BJ (cell line): ENCODE measurements at regions of chr9 and their contacts with region 1.

Region 1: DNA sequence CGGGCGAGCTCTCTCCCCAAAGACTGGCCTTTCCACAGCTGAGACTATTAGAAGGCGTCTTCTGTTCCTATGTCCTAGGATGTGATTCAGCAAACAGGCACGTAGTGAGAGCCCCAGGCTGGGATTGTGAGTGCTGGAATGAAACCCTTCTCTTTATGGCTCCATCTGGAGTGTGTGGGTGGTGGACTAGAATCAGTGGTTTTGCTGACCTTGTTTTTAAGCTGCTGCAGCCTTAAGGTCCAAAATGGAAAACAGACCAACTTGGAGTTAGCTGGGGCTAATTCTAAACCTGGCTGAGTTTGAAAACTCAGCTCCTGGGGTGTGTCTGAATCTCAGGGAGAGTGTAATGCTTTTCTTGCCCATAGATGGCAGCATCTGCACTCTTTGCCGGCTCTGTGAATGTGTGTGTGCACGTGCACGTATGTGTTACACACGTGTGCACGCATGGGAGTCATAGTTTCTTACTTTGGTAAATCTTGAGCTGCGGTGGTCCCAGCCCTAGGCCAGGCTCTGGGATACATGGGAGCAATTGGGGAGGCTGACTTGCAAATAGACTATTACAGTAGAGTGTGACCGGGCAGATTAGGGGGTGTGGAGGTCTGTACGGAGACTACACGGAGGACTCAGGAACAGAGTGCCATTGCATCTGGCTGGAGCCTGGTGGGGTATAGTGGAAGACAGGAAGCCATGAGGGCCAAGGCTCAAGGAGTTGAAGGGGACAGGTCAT is 10.7 kb downstream of the GSN start:
- DNase-seq: peak; percentile 100
- H3K4me3 ChIP-seq: no peak overlapping the region
- H3K27me3 ChIP-seq: no peaks in the 10 kb centered on the region
- CTCF ChIP-seq: peak; percentile 86

Region 2: GRCh38 chr9:121222524-121223171 is 56.0 kb before region 1 on chr9:
- CTCF ChIA-PET with region 1: interaction called, 19 read pairs
- POLR2A ChIA-PET with region 1: no interaction called
- DNase-seq: no peak
- H3K4me3 ChIP-seq: no peak overlapping the region
- H3K27me3 ChIP-seq: no peaks in the 10 kb centered on the region
- CTCF ChIP-seq: peak; percentile 72

Region 3: GRCh38 chr9:121233906-121234901 is 44.5 kb before region 1 on chr9:
- CTCF ChIA-PET with region 1: interaction called, 15 read pairs
- POLR2A ChIA-PET with region 1: no interaction called
- DNase-seq: no peak
- H3K4me3 ChIP-seq: no peak overlapping the region
- H3K27me3 ChIP-seq: no peaks in the 10 kb centered on the region
- CTCF ChIP-seq: no peak

Region 4: DNA sequence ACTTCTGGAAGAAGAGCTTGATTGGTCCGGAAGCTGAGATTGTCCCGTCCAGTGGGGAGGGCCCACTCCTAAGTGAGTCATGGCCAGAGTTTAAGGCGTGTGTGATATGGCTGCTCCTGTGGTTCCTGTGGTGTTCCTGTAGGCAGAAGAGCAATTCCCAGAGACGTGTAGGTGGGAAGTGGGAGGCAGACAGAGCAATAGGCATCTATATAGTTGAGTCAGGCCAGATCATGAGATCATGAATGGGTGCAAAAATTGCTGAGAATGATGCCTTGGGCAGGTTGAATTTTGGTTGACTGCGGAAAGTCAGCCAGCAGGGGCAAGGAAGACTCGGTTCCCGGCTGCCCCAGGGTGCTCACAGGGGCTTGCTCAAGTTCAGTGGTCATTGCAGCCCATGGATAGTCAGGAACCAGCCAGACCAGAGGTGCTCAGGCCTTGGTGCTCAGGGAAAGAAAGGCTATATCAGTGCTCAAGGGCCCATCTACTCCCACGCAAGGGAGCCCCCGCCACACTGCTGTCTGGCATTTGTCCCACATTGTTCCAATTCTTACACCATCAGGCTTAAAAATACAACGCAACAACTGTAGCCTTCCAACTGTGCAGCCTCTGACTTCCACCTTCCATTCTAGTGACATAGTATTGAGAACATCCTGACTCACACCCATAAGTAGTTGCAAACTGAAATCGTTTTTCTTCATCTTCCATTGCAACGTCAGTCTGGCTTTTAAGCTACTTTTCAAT is 31.7 kb before region 1 on chr9:
- CTCF ChIA-PET with region 1: interaction called, 10 read pairs
- POLR2A ChIA-PET with region 1: interaction called, 4 read pairs
- DNase-seq: peak; percentile 70
- H3K4me3 ChIP-seq: no peak overlapping the region
- H3K27me3 ChIP-seq: no peaks in the 10 kb centered on the region
- CTCF ChIP-seq: no peak

Region 5: GRCh38 chr9:121267689-121268597 is 10.8 kb before region 1 on chr9 and contains the start of gene GSN:
- CTCF ChIA-PET with region 1: interaction called, 24 read pairs
- POLR2A ChIA-PET with region 1: interaction called, 4 read pairs
- DNase-seq: no peak
- H3K4me3 ChIP-seq: peak within 1 kb of the TSS; percentile 89
- H3K27me3 ChIP-seq: no peaks in the 10 kb centered on the region
- CTCF ChIP-seq: peak; percentile 24; the same call in 1 of the 2 replicates
- polyA plus RNA-seq, gene GSN: 493 and 765 TPM in 2 replicates

Region 6: GRCh38 chr9:121376214-121376830 is 97.6 kb after region 1 on chr9:
- CTCF ChIA-PET with region 1: interaction called, 11 read pairs
- POLR2A ChIA-PET with region 1: no interaction called
- DNase-seq: no peak
- H3K4me3 ChIP-seq: no peak overlapping the region
- H3K27me3 ChIP-seq: no peaks in the 10 kb centered on the region
- CTCF ChIP-seq: peak; percentile 28